Posterior vena cava (tissue), 2 donors: ENCODE measurements at regions of chr3 and their contacts with region 1.

Region 1: DNA sequence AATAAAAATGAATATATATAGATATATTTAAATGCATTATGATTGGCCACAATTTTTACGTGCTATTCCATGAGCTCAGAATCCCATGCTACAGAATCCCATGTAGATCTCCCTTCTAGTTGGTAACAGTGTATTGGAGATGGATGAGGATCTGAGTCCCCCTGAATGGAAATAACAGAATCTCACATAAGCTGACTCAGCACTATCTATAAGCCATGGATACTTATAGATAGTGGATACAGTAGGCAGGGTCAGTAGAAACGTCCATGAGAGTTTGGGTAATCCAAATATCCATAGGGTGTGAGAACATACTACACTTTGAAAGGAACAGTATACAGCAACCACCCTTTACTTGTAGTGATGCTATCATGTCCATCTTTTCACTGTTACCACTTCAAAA is 375.4 kb downstream of the EPHA6 start:
- DNase-seq: no peak

Region 2: DNA sequence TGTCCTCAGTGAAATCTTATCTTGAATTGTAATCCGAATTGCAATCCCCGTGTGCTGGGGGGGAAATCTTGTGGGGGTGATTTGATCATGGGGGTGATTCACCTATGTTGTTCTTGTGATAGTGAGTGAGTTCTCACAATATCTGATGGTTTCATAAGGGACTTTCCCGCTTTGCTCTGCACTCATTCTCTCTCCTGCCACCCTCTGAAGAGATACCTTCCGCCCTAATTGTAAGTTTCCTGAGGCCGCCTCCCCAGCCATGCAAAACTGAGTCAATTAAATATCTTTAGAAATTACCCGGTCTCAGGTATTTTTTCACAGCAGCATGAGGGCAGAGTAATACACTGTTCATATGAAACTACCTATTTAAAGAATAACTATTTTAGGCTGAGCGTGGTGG is 679.5 kb before region 1 on chr3:
- intact Hi-C with region 1: loop called in 1 of 2 experiments (anchors 5 kb)
- DNase-seq: no peak